ENCODE measurements at regions of chr6 and their contacts with region 1.

Region 1: DNA sequence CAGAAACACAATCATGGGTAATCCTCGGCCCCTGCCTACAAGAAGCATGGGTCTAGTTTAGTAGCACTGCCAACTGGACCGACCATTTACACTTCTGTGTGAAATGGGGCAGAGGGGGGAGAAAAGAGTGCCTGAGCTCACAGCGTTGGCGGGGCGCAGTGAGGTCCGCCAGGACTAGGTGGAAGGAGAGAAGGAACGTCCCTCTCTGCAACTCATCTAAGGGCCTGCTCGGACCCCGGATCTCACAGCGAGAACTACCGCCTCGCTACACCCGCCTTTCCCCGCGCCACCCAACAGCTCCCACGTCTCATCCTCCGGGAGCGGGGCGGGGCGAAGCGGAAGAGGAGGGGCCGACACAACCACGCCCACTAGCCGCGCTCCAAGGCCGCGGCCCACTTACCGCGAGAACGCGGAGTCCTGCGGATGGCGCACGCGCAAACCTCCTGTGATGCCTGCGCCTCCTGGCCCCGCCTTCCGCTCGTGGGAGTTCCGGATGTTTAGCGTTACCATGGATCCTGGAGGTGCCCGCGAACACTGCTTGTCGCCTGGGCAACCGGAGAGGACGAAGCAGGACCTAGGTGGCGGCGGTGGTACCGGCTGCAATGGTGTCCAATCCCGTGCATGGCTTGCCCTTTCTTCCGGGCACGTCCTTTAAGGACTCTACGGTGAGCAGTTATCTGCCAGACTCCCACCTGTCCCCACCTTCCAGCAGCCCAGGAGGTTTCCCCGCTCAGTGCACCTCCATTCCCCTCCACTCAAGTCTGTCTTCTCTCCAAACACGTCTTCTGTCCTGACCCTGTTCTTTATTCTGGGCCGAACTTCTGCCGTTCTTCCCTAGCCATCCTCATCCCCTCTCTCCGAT is at the start of gene EFHC1:
- DNase-seq: peak; percentile 99
- ATAC-seq: peak; percentile 94
- H3K4me3 Mint-ChIP-seq: no peak within 1 kb of the TSS
- H3K27ac Mint-ChIP-seq: peak within 1 kb of the TSS; percentile 82
- H3K4me1 Mint-ChIP-seq: peaks cover 22% of the 10 kb centered on the region
- H3K27me3 Mint-ChIP-seq: no peaks in the 10 kb centered on the region
- total RNA-seq, gene EFHC1: 2.2 to 3.6 TPM

Region 2: DNA sequence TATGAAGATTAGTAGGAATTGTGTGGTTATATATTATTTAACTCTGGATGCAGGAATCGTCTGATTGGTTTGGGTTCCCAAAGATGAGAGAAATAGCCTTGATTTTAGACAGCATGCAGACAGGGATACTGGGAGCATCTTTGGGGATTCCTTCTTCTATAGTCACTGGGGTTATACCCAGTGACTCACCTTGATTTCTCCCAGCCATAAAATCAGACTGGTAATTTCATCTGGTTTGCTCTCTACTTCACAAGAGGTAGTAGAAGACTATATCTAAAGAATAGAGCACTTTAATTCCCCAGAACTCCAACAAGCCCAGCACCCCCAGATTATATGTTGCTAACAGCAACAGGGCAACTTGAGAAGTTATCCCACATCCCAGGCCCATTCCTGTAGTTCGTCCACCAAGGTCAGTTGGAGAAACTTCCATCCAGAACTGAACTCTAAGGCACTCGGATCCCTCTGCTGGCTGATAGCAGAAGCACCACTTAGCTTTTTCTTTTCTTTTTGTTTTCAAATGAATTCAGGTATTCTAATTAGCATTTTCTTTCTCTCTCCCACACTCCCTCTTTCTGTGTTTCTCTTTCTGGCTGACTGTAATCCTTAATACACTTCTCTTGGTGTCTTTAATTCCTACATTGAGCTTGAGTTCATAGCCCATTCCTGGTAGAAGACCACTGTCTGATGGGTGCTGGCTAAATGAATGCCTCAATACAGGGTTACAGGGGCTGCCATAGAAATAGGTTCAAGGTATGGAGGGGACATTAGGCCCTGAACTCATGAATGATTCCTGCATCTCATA is 20.3 kb before region 1 on chr6:
- CTCF ChIA-PET with region 1: interaction called, 45 read pairs
- POLR2A ChIA-PET with region 1: no interaction called
- intact Hi-C with region 1: loop called in 1 of 2 experiments (anchors 2 kb)
- DNase-seq: peak; percentile 54
- ATAC-seq: peak; percentile 51
- H3K4me3 Mint-ChIP-seq: no peak overlapping the region
- H3K27ac Mint-ChIP-seq: no peak overlapping the region
- H3K4me1 Mint-ChIP-seq: peaks cover 64% of the 10 kb centered on the region
- H3K27me3 Mint-ChIP-seq: no peaks in the 10 kb centered on the region

Region 3: DNA sequence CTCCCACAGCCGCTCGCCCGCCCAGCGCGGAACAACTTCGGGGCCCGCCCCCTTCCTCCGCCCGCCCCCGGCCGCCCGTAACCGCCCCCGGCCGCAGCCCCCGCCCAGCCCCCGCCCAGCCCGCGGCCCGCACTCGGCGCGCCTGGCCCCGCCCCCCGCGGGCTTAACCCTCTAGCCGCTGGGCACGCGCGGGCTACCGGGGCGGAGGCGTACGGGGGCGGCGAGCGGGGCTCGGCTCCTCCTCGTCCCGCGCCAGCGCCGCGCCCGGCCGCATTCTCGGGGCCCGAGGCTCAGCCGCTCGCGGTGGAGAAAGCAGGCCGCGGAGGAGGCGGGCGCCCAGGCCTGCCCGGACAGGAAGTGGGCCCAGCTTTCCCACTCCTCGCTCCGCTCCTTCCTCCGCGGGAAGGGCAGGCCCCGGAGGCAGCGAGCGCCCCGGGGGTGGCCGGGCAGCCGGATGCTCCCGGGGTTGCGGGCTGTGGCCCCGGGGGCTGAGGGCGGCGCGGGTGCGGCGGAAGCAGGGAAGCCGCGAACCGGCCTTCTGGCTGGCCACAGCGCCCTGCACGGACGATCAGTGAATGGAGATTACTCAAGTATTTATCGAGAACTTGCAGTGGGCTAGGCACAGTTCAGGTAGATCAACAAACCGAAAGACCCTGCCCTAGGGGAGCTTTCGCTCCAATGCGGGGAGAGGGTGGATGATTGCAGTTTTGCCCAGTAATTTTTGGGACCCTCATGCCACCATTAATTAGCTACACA is 157.2 kb after region 1 on chr6 and contains the start of gene TRAM2:
- CTCF ChIA-PET with region 1: interaction called, 10 read pairs
- POLR2A ChIA-PET with region 1: no interaction called
- intact Hi-C with region 1: loop called (anchors 1 to 5 kb)
- DNase-seq: peak; percentile 78
- ATAC-seq: peak; percentile 56
- H3K4me3 Mint-ChIP-seq: peak within 1 kb of the TSS; percentile 79
- H3K27ac Mint-ChIP-seq: peak within 1 kb of the TSS; percentile 80
- H3K4me1 Mint-ChIP-seq: peaks cover 43% of the 10 kb centered on the region
- H3K27me3 Mint-ChIP-seq: peaks cover 2% of the 10 kb centered on the region
- total RNA-seq, gene TRAM2: 3.5 to 3.6 TPM

Region 4: DNA sequence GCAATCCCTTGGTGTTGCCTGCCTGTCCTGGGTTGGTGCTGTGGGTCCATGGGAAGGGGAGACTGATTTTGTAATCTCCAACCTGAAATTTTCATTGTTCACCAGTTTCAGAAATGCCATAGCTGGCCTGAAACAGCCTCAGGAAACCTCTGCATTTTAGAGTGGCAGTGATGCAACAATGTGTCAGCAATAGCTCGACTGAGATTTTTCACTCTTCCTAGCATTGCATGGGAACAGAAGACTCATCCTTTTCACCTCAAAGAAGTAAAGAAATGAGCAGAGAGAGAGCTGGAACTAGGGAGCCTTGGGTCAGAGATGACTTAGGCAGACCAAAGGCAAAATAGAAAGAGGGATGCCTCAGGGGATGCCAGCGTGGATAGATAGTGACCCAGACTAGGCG is 227.2 kb after region 1 on chr6:
- CTCF ChIA-PET with region 1: interaction called, 15 read pairs
- POLR2A ChIA-PET with region 1: no interaction called
- intact Hi-C with region 1: no loop called
- DNase-seq: no peak
- ATAC-seq: peak; percentile 46
- H3K4me3 Mint-ChIP-seq: no peak overlapping the region
- H3K27ac Mint-ChIP-seq: peak overlapping the region; percentile 53
- H3K4me1 Mint-ChIP-seq: peaks cover 17% of the 10 kb centered on the region
- H3K27me3 Mint-ChIP-seq: peaks cover 5% of the 10 kb centered on the region

Region 5: DNA sequence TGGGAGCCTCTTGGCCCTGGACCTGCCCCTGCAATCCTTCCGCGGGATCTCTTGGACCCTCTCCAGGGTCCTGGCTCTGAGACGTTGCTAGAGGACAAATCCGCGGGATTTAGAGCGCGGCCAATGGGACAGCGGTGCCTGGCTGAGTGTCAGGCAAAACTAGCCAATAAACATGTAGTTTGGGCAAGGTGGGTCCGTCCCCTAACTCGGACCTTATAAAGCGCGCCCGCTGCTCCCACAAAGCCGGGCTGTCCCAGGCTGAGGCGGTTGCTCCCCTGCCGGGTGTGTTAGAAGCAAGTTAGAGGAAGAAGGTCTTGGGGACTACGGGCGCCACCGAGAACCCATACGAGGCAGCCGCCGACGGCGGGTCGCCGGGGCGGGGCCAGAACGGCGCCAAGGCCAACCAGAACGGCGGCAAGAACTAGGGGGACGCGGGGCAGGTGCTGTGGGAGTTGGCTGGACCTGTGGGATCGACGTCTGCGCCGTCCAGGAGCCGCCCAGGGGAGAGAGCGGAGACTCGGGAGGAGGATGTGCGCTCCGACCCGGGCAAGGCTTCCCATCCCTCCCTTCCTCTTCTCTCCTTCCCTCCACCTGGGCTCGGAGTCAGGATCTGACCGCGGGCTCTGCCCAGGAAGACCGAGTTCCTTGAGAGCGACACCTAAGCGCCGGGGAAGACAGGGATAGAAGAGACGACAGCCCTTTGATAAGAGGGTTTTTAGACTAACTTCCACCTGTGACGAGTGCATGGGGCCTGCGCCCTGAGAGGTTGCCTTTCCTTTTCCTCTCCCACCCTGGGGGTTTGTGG is 244.3 kb after region 1 on chr6:
- CTCF ChIA-PET with region 1: interaction called, 67 read pairs
- POLR2A ChIA-PET with region 1: no interaction called
- intact Hi-C with region 1: loop called (anchors 1 kb)
- DNase-seq: peak; percentile 86
- ATAC-seq: peak; percentile 99
- H3K4me3 Mint-ChIP-seq: no peak overlapping the region
- H3K27ac Mint-ChIP-seq: no peak overlapping the region
- H3K4me1 Mint-ChIP-seq: peaks cover 11% of the 10 kb centered on the region
- H3K27me3 Mint-ChIP-seq: no peaks in the 10 kb centered on the region

Region 6: DNA sequence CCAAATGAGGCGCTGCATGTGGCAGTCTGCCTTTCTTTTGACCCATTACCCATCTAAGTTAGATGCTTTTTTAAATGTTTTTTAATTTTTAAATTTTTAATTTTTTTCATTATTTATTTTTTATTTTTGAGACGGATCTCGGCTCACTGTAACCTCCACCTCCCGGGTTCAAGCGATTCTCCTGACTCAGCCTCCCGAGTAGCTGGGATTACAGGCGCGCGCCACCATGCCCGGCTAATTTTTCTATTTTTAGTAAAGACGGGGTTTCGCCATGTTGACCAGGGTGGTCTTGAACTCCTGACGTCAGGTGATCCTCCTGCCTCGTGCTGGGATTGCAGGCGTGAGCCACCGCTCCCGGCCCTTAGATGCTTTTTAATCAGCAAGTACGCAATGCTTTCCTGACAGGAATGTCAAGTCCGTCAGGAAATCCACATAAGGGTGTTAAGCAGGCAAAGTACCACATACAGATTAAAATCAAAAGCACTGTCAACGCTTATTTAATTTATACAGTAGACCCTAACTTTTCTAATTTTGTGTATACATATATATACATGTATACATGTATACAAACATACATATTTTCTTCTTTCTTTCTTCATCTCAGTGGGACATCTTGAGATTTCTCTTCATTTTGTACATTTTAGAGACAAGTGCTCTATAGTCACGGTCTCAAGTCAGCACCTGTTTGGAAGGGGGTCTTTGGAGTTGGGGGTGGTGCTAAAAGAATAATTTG is 576.0 kb after region 1 on chr6:
- CTCF ChIA-PET with region 1: interaction called, 4 read pairs
- POLR2A ChIA-PET with region 1: no interaction called
- intact Hi-C with region 1: loop called in 1 of 2 experiments (anchors 1 kb)
- DNase-seq: peak; percentile 68
- ATAC-seq: no peak
- H3K4me3 Mint-ChIP-seq: peak overlapping the region; percentile 83
- H3K27ac Mint-ChIP-seq: peak overlapping the region; percentile 77
- H3K4me1 Mint-ChIP-seq: peaks cover 32% of the 10 kb centered on the region
- H3K27me3 Mint-ChIP-seq: peaks cover 4% of the 10 kb centered on the region

Measured in activated CD4-positive, alpha-beta T cell treated with anti-CD3 and anti-CD28 coated beads for 36 hours (primary cell).